Endothelial cell of umbilical vein (primary cell): ENCODE measurements at regions of chrX and their contacts with region 1.

Region 1: DNA sequence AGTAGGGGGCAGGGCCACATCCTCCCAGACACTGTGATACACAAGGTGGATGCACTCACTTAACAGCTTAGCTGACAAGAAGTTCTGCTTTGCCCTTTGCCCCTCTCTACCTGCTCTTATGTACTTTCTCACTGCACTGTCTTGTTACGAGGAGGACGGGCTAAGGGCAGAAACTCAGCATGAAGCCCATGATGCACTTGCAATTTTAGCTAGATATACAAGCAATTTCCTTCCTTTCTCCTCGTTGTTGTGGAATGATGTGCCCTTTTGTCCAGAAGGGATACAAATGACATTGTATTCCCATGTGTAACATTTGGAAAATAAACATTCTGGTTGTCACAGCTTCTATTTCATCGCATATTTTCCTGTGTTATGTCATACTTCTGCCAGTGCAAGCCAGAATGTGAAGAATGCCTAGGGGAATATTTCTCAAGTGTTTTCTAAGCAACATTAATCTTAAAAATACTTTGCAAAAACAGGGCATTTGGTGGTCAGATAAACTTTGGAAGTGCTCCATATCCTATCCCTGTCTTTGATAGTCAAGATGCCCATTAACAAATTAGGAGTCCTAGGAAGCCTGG is 47.2 kb downstream of the MAOA start:
- DNase-seq: peak; percentile 88
- H3K4me3 ChIP-seq: peak overlapping the region in 1 of 3 experiments; percentile 33
- H3K27ac ChIP-seq: peak overlapping the region; percentile 94
- H3K4me1 ChIP-seq: peaks cover 51% of the 10 kb centered on the region
- H3K27me3 ChIP-seq: no peaks in the 10 kb centered on the region
- CTCF ChIP-seq: no peak
- POLR2A ChIP-seq: no peak

Region 2: DNA sequence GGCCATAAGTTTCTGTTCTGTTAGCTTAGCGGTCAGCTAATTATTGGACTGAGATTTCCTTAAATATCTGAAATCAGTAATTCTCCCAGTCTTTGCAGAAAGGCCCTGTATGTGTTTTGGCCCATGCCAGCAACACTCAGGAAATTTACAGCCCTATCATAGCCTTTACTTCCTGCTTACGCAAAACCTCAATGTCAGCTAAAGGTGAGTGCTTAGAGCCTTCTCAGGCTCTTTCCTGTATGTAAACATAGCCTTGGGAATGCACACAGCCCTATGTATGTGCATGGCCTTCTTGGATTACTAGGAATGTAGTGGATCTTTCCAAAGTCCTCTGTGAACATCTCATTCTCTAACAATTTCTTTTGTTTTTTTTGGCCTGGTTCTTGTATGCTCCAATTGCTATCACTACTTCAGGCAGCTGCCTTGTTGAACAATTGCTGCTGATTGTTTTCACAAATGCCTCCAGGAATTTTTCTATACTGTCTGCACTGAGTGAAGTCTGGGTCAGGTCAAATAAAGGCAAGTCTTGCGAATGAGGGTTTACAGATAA is 1125.3 kb before region 1 on chrX:
- CTCF ChIA-PET with region 1: no interaction called
- POLR2A ChIA-PET with region 1: no interaction called
- dilution Hi-C with region 1: no loop called
- intact Hi-C with region 1: loop called (anchors 5 kb)
- DNase-seq: peak; percentile 49
- H3K4me3 ChIP-seq: no peak overlapping the region
- H3K27ac ChIP-seq: peak overlapping the region; percentile 37
- H3K4me1 ChIP-seq: peaks cover 3% of the 10 kb centered on the region
- H3K27me3 ChIP-seq: no peaks in the 10 kb centered on the region
- CTCF ChIP-seq: no peak
- POLR2A ChIP-seq: no peak

Region 3: DNA sequence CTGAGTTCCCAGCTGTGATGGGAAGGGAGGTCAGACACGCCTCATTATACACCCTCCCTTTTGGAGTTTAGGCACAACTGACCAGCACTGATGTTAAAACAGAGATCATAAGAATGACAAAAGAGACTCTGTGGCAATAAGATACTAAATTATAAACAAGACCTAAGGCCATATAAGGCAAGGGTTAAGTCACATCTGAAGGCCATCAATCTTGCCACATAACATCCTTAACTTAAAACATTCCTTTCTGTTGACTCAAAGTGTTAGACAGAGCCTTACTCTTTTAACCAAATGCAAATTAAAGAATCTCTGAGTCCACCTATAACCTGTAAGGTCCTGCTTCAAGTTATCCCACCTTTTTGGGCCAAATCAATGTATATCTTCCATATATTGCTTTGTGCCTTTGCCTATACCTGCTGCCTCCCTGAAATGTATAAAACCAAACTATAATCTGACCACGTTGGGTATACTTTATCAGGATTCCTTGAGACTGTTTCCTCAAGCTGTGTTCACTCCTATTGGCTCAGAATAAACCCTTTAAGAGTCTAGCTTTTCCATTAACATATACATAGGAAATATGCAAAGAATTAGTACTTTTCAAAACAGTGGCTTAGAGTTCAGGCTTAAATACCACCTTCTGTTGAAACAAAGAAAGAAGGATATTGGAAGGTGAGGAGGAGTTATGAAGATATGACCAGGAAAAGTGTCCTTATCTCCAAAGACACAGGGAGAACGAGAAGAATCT is 710.9 kb before region 1 on chrX:
- CTCF ChIA-PET with region 1: no interaction called
- POLR2A ChIA-PET with region 1: no interaction called
- dilution Hi-C with region 1: no loop called
- intact Hi-C with region 1: loop called (anchors 2 kb)
- DNase-seq: peak; percentile 70
- H3K4me3 ChIP-seq: no peak overlapping the region
- H3K27ac ChIP-seq: peak overlapping the region; percentile 65
- H3K4me1 ChIP-seq: peaks cover 35% of the 10 kb centered on the region
- H3K27me3 ChIP-seq: no peaks in the 10 kb centered on the region
- CTCF ChIP-seq: no peak
- POLR2A ChIP-seq: peak; percentile 16

Region 4: DNA sequence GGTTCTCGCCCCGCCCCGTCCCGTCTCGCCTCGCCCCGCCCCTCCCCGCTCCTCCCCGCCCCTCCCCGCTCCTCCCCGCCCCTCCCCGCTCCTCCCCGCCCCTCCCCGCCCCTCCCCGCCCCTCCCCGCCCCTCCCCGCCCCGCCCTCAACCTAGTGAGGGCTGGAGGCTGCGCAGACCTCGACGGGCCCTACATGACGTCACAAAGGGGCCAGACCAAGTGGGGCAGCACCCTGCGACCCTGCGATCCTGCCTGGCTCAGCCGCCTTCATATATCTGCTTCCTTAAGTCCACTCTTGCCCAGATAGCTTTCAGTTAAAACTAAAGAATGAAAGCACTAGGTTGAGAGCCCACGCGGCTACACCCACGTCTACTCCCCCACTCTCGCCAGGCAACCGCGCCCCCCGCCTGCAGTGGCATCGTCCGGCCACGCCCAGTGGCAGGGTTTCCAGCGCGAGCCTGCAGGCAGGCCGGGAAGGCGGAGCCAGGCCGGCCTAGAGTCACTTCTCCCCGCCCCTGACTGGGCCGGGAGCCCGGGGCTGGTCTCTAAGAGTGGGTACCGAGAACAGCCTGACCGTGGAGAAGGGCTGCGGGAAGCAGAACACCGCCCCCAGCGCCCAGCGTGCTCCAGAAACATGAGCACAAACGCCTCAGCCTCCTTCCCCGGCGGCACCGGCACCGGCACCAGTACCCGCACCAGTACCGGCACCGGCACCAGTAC is 48.7 kb before region 1 on chrX:
- CTCF ChIA-PET with region 1: interaction called, 4 read pairs
- POLR2A ChIA-PET with region 1: interaction called, 3 read pairs
- dilution Hi-C with region 1: no loop called
- intact Hi-C with region 1: loop called (anchors 1 kb)
- DNase-seq: peak; percentile 92
- H3K4me3 ChIP-seq: peak overlapping the region; percentile 42 to 76 (median 74)
- H3K27ac ChIP-seq: peak overlapping the region; percentile 95
- H3K4me1 ChIP-seq: no peaks in the 10 kb centered on the region
- H3K27me3 ChIP-seq: no peaks in the 10 kb centered on the region
- CTCF ChIP-seq: peak; percentile 9 to 41
- POLR2A ChIP-seq: peak; percentile 52

Region 5: DNA sequence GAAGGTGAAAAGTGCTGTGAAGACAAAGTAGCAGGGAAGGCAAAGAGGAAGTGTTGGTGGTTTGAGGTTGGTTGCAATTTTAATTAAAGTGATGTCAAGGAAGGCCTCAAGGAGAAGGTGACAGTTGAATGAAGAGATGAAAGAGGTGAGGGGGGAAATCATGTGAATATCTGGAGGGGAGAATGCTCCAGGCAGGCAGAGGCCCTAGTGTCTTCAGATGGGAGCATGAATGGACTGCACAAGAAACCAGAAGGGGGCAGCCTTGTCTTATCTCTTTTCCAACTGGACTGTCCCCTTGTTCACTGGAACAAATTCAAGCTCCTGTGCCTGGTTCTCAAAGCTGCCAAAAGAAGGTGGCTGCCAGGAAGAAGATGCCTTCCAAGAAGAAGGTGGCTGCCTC is 110.6 kb after region 1 on chrX:
- CTCF ChIA-PET with region 1: no interaction called
- POLR2A ChIA-PET with region 1: no interaction called
- dilution Hi-C with region 1: no loop called
- intact Hi-C with region 1: no loop called
- DNase-seq: no peak
- H3K4me3 ChIP-seq: no peak overlapping the region
- H3K27ac ChIP-seq: no peak overlapping the region
- H3K4me1 ChIP-seq: no peaks in the 10 kb centered on the region
- H3K27me3 ChIP-seq: no peaks in the 10 kb centered on the region
- CTCF ChIP-seq: peak in 1 of 2 donors; percentile 7
- POLR2A ChIP-seq: no peak